ENCODE measurements at regions of chr4 and their contacts with region 1.

Region 1: GRCh38 chr4:169229571-169230028 is 41.2 kb downstream of the SH3RF1 start:
- DNase-seq: peak in 1 of 5 donors; percentile 42
- H3K4me3 ChIP-seq: no peak overlapping the region
- H3K27ac ChIP-seq: no peak overlapping the region
- H3K4me1 ChIP-seq: peaks cover 3% of the 10 kb centered on the region
- H3K27me3 ChIP-seq: no peaks in the 10 kb centered on the region
- CTCF ChIP-seq: no peak
- EP300 ChIP-seq: no peak
- POLR2A ChIP-seq: no peak

Region 2: GRCh38 chr4:169045862-169046584 is 183.6 kb before region 1 on chr4:
- intact Hi-C with region 1: no loop called
- DNase-seq: no peak
- H3K4me3 ChIP-seq: no peak overlapping the region
- H3K27ac ChIP-seq: no peak overlapping the region
- H3K4me1 ChIP-seq: peaks cover 4% of the 10 kb centered on the region
- H3K27me3 ChIP-seq: no peaks in the 10 kb centered on the region
- CTCF ChIP-seq: no peak
- EP300 ChIP-seq: no peak
- POLR2A ChIP-seq: no peak

Region 3: DNA sequence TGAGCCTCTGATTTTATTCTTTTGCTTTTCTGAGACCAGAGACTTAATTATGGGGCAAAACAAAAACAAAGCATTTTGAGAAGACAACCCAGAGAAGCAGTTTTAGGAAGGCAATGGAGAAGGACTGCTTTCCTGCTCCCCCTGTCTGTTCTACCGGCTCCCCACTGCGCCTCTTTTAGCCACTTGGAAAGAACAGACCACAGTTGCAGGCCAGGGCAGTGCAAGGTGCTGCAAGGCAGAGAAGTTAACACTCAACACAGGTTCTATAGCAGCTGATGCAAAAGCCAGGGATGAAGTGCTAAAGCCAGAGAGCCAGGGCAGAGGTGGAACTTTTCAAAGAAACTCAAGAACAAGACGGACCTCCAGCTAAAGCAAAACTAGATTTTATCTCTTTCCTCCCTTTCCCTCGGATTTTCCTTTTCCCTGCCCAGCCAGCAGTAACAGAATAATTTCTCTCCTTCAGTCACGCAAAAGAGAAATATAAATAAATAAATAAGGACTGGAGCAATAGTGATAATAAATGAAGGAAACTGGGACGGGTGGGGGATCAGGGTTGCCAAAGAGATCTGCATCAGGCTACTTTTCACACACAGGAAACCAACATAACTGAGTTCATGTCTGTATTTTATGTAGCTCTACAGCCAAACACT is 30.7 kb after region 1 on chr4:
- intact Hi-C with region 1: loop called in 1 of 4 experiments (anchors 2 kb)
- DNase-seq: no peak
- H3K4me3 ChIP-seq: no peak overlapping the region
- H3K27ac ChIP-seq: no peak overlapping the region
- H3K4me1 ChIP-seq: peaks cover 16% of the 10 kb centered on the region
- H3K27me3 ChIP-seq: no peaks in the 10 kb centered on the region
- CTCF ChIP-seq: no peak
- EP300 ChIP-seq: no peak
- POLR2A ChIP-seq: no peak

Region 4: DNA sequence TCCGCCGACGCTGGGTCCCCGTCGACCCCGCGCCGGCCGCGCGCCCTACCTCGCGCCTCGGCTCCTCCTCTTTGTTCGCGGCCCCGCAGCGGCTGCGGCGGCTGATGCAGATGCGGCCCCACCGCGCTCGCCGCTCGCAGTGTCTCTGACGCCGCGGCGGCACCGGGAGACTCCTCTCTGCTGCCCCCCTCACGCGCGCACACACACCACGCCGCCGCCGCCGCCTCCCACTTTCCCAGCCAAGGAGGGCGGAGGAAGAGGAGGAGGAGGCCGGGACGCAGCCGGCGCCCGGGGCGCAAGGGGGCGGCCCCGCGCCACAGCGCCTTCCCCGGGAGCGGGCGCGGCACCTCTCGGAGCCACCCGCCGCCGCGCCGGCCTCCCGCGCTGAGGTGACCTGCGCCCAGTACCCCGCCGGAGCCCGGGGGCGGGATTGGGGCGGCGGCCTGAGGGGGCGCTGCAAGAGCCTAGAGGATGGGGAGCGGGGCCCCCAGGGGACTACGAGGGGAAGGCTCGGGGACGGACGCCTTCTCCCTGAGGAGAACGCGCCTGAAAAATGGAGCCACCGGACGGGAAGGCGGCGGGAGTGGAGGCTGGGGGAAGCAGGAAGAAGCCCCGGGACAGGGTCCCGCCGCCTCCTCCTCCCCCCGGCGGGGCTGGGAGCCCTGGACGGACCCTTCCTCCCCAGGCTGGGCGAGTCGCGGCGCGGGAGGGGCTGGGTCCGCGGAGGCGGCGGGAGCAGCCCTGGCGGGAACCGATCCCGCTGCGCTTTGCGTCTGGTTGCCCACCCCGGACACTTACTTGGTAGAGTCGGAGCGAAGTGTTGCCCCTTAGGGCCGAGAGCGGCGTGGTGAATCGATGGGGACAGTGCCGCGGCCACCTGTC is 41.5 kb after region 1 on chr4 and contains the start of gene SH3RF1:
- intact Hi-C with region 1: no loop called
- DNase-seq: peak; percentile 91 to 93 (median 93)
- H3K4me3 ChIP-seq: peak within 1 kb of the TSS; percentile 93
- H3K27ac ChIP-seq: peak within 1 kb of the TSS; percentile 72 to 95
- H3K4me1 ChIP-seq: peaks cover 14% of the 10 kb centered on the region
- H3K27me3 ChIP-seq: no peaks in the 10 kb centered on the region
- CTCF ChIP-seq: peak in 1 of 3 donors; percentile 47
- EP300 ChIP-seq: no peak
- POLR2A ChIP-seq: peak; percentile 92
- total RNA-seq, gene SH3RF1: 18.7 to 32.6 (median 22.4) TPM

Region 5: DNA sequence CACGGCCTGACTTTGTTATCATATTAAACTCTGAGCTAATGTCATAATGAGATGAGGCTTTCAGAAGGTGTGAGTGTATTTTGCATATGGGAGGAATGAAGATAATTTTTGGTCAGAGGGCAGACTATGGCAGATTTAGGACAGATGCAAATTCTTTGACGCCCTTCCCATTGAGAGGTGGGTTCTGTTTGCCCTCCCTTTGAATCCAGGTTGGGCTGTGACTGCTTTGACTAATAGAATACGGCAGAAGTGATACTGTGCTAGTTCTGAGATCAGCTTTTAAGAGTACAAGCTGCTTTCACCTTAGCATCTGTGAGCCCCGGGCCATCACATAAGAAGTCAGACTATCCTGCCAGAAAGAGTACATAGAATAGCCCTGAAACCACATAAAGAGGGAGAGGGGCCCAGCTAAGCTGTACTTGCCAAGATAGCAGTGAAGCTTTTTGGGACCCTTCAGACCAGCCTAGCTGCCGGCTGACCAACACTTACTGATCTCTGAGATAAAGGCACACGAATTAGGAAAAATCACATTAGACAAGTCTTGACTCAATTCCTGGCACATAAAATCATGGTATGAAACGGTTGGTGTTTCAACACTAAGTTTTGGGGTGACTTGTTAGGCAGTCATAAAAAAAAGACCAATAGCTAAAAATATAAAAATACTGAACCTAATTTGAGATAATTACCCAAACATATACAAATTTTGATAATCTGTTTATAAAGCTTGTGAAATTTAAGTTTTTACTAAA is 207.9 kb after region 1 on chr4:
- intact Hi-C with region 1: no loop called
- DNase-seq: no peak
- H3K4me3 ChIP-seq: no peak overlapping the region
- H3K27ac ChIP-seq: no peak overlapping the region
- H3K4me1 ChIP-seq: peaks cover 3% of the 10 kb centered on the region
- H3K27me3 ChIP-seq: no peaks in the 10 kb centered on the region
- CTCF ChIP-seq: no peak
- EP300 ChIP-seq: no peak
- POLR2A ChIP-seq: no peak

Region 6: GRCh38 chr4:169485791-169486742 is 256.5 kb after region 1 on chr4:
- intact Hi-C with region 1: no loop called
- DNase-seq: peak in 2 of 5 donors; percentile 24 to 42
- H3K4me3 ChIP-seq: no peak overlapping the region
- H3K27ac ChIP-seq: no peak overlapping the region
- H3K4me1 ChIP-seq: no peaks in the 10 kb centered on the region
- H3K27me3 ChIP-seq: no peaks in the 10 kb centered on the region
- CTCF ChIP-seq: peak in 2 of 3 donors; percentile 52 to 66
- EP300 ChIP-seq: no peak
- POLR2A ChIP-seq: no peak